HCT116 (cell line): ENCODE measurements at regions of chr11 and their contacts with region 1.

Region 1: GRCh38 chr11:72585762-72586311 is 88.4 kb downstream of the PDE2A start:
- DNase-seq: peak; percentile 38
- ATAC-seq: peak; percentile 94
- H3K4me3 ChIP-seq: no peak overlapping the region
- H3K27ac ChIP-seq: no peak overlapping the region
- H3K4me1 ChIP-seq: peaks cover 0 to 6% of the 10 kb centered on the region in 2 experiments; a peak in 1 of 4 replicates
- H3K27me3 ChIP-seq: no peaks in the 10 kb centered on the region
- CTCF ChIP-seq: peak; percentile 82 to 88 (median 85)
- POLR2A ChIP-seq: no peak
- RAD21 ChIP-seq: peak; percentile 86

Region 2: DNA sequence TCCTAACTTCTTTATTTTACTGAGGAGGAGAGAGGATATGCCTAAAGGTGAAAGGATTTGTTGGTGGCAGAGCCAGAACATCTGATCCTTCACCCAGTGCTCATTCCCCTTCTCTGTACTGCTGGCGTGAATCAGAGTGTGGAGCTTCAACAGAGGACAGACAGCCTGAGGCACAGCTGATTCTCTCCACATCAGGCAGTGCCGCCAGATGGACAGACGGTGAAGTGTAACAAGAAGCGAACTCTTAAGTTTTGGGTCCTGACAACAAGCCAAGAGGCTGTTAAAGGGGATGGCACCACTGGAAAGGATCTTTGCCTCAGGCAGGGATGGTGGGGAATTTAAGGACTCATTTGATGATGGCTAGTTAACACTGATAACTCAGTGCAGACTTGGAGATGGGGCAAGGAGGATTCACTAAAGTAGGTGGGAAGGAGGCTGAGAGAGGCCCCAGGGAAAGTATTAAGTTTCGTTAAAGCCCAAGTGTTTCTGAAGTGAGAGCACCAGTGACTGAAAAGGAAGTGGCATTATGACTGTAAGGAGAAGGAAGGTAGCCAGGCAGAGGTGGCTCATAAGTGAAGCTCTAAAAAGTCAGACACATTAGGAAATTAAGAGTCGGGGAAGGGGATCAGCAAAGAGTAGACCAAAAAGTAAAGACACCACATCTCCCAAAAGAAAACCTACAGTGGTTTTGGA is 232.8 kb before region 1 on chr11:
- CTCF ChIA-PET with region 1: no interaction called
- POLR2A ChIA-PET with region 1: no interaction called
- RAD21 ChIA-PET with region 1: no interaction called
- intact Hi-C with region 1: no loop called
- DNase-seq: no peak
- ATAC-seq: no peak
- H3K4me3 ChIP-seq: no peak overlapping the region
- H3K27ac ChIP-seq: no peak overlapping the region
- H3K4me1 ChIP-seq: peaks cover 0 to 9% of the 10 kb centered on the region in 2 experiments; a peak in 2 of 4 replicates
- H3K27me3 ChIP-seq: no peaks in the 10 kb centered on the region
- CTCF ChIP-seq: no peak; a peak in 1 of 6 replicates
- POLR2A ChIP-seq: no peak
- RAD21 ChIP-seq: no peak

Region 3: DNA sequence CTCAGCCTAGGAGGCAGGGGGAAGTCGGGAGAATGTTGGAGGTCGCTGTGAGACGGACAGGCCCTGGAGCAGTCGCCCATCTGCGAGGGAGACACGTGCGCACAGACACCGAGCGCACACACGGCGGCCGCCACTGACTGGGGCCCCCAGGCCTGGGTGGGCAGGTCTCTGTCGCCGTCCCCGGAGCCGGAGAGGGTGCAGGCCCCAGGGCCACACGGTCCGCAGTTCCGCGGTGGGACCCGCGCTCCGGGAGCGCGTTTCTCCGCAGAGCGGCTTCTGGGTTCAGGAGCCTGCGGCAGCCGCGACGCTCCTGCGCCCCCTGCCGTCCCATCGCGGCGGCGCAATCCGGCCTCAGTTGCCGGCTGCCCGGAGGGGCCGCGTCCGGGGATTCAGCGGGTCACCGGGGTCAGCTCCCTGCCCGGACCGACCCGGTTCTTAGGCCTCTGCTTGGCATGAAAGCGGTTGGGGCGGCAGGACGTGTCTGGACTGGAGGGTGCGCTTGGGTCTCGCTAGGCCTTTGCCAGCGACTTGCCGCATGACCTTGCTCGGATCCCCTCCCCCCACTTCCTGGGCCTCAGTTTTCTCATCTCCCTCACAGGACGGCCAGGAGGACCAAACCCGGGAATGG is 57.2 kb after region 1 on chr11:
- CTCF ChIA-PET with region 1: interaction called, 16 read pairs
- POLR2A ChIA-PET with region 1: interaction called, 3 read pairs
- RAD21 ChIA-PET with region 1: interaction called, 3 read pairs
- intact Hi-C with region 1: loop called (anchors 1 kb)
- DNase-seq: peak; percentile 32
- ATAC-seq: peak; percentile 80
- H3K4me3 ChIP-seq: peak overlapping the region; percentile 44 to 59
- H3K27ac ChIP-seq: no peak overlapping the region; the same call in 1 of the 2 replicates
- H3K4me1 ChIP-seq: peaks cover 4 to 22% of the 10 kb centered on the region in 2 experiments; a peak in 3 of 4 replicates
- H3K27me3 ChIP-seq: peaks cover 13% of the 10 kb centered on the region; the same call in 1 of the 2 replicates
- CTCF ChIP-seq: peak; percentile 74 to 86 (median 78)
- POLR2A ChIP-seq: no peak
- RAD21 ChIP-seq: peak; percentile 86